ENCODE measurements at regions of chr3 and their contacts with region 1.

Region 1: GRCh38 chr3:56547486-56547885 is 9.5 kb upstream of the CCDC66 start:
- DNase-seq: peak; percentile 28
- H3K4me3 Mint-ChIP-seq: no peak overlapping the region
- H3K27ac Mint-ChIP-seq: no peak overlapping the region
- H3K4me1 Mint-ChIP-seq: no peaks in the 10 kb centered on the region
- H3K27me3 Mint-ChIP-seq: peaks cover 69% of the 10 kb centered on the region
- CTCF ChIP-seq: peak; percentile 8

Region 2: GRCh38 chr3:56347219-56347871 is 200.1 kb before region 1 on chr3:
- CTCF ChIA-PET with region 1: interaction called, 3 read pairs
- POLR2A ChIA-PET with region 1: no interaction called
- intact Hi-C with region 1: loop called (anchors 5 kb)
- DNase-seq: peak; percentile 63
- H3K4me3 Mint-ChIP-seq: no peak overlapping the region
- H3K27ac Mint-ChIP-seq: no peak overlapping the region
- H3K4me1 Mint-ChIP-seq: peaks cover 6% of the 10 kb centered on the region
- H3K27me3 Mint-ChIP-seq: peaks cover 37% of the 10 kb centered on the region
- CTCF ChIP-seq: no peak

Measured in MCF 10A (cell line).